ENCODE measurements at regions of chr4 and their contacts with region 1.

Region 1: DNA sequence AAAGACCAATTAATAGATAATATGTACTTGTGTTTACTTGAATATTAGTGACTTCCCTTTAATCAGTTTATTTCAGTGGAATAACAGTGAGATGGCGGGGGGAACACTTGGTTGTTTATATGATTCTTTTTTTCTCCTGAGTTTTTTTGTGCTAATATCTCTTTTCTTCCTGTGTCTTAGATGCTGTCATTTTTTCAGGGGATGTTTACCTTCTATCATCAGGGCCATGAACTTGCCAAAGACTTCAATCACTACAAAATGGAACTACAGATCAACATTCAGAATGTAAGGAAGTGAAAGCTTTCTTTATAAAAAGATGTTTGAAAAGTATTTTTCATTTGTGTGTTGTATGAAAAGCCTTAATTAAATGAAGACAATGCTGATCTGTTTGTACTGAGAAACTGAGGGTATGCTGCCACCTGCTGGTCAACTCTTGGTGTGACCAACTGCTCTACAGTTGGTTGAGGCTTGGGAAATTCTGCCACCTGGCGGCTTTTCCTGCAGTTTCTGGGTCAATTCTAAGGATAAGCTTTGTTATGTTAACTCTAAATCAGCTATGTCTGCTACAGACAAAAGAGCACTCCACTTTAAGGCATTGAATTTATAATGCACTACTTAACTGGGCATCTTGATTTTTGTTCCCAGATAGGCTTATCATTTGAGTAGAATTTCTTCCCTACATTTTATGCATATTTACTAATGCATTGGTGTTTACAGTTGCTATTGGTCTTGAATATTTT is 134.8 kb downstream of the ARHGAP10 start:
- DNase-seq: peak; percentile 89 to 97
- ATAC-seq: peak; percentile 93 to 100 (median 99)
- H3K4me3 ChIP-seq: no peak overlapping the region
- H3K4me3 Mint-ChIP-seq: no peak overlapping the region
- H3K27ac ChIP-seq: no peak overlapping the region
- H3K27ac Mint-ChIP-seq: peak overlapping the region; percentile 42 to 77
- H3K4me1 ChIP-seq: no peaks in the 10 kb centered on the region
- H3K4me1 Mint-ChIP-seq: peaks cover 15 to 17% of the 10 kb centered on the region in 2 donors
- H3K27me3 ChIP-seq: no peaks in the 10 kb centered on the region
- H3K27me3 Mint-ChIP-seq: no peaks in the 10 kb centered on the region
- CTCF ChIP-seq: peak; percentile 100

Region 2: GRCh38 chr4:147160908-147161513 is 705.7 kb before region 1 on chr4:
- intact Hi-C with region 1: loop called (anchors 5 kb)
- DNase-seq: peak in 1 of 2 donors; percentile 30
- ATAC-seq: peak in 1 of 3 donors; percentile 45
- H3K4me3 ChIP-seq: no peak overlapping the region
- H3K4me3 Mint-ChIP-seq: no peak overlapping the region
- H3K27ac ChIP-seq: no peak overlapping the region
- H3K27ac Mint-ChIP-seq: no peak overlapping the region
- H3K4me1 ChIP-seq: no peaks in the 10 kb centered on the region
- H3K4me1 Mint-ChIP-seq: no peaks in the 10 kb centered on the region
- H3K27me3 ChIP-seq: no peaks in the 10 kb centered on the region
- H3K27me3 Mint-ChIP-seq: peaks cover 8% of the 10 kb centered on the region in 2 donors
- CTCF ChIP-seq: peak; percentile 36

Region 3: DNA sequence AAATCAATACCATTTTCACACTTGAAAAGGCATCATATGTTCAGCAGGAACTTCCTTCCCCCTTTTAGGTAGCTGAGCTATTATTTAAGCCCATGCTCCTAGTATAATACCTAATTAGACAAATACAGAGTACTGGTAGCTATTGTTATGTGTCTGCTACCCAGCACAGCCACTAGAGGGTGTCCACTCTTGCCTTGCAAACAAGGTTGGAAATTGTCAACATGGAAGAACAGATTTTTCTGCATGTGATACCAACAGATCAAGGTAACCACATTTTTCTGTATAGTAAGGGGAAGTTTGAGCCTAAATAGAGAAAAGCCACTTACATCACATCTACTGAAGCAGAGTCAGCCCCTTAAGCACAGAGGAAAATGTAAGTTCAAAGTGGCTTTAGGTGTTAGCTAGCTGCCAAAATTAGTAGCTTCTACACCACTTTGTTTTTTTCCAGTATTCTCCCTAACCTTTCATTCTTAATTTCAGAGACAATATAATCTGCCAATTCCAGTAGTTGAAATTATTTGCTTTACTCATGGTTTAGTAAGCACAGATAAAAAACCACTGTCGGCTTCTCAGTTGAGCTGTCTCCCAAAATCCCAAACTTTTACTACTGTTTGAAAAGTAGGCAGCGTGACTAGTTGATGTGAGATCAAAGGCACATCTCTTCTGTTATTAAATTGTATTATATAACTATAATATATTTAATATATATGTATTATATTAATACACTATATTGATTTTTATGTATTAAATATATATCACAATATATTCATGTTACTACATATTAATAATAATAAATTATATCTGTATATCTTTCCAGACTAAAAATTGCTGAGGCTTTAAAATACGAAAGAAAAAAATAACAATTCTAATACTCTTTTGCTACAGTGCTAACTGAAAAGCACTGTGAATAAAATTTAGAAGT is 347.6 kb before region 1 on chr4:
- intact Hi-C with region 1: loop called (anchors 1 kb)
- DNase-seq: peak in 1 of 2 donors; percentile 66
- ATAC-seq: peak in 2 of 3 donors; percentile 60 to 71
- H3K4me3 ChIP-seq: no peak overlapping the region
- H3K4me3 Mint-ChIP-seq: no peak overlapping the region
- H3K27ac ChIP-seq: no peak overlapping the region
- H3K27ac Mint-ChIP-seq: no peak overlapping the region
- H3K4me1 ChIP-seq: no peaks in the 10 kb centered on the region
- H3K4me1 Mint-ChIP-seq: no peaks in the 10 kb centered on the region
- H3K27me3 ChIP-seq: no peaks in the 10 kb centered on the region
- H3K27me3 Mint-ChIP-seq: peaks cover 7 to 12% of the 10 kb centered on the region in 2 donors
- CTCF ChIP-seq: peak; percentile 73

Region 4: GRCh38 chr4:147590249-147590920 is 276.3 kb before region 1 on chr4:
- intact Hi-C with region 1: loop called (anchors 2 kb)
- DNase-seq: peak in 1 of 2 donors; percentile 60
- ATAC-seq: peak in 1 of 3 donors; percentile 45
- H3K4me3 ChIP-seq: no peak overlapping the region
- H3K4me3 Mint-ChIP-seq: no peak overlapping the region
- H3K27ac ChIP-seq: no peak overlapping the region
- H3K27ac Mint-ChIP-seq: no peak overlapping the region
- H3K4me1 ChIP-seq: no peaks in the 10 kb centered on the region
- H3K4me1 Mint-ChIP-seq: no peaks in the 10 kb centered on the region
- H3K27me3 ChIP-seq: peaks cover 3% of the 10 kb centered on the region
- H3K27me3 Mint-ChIP-seq: peaks cover 11 to 13% of the 10 kb centered on the region in 2 donors
- CTCF ChIP-seq: peak; percentile 62

Region 5: GRCh38 chr4:147617173-147617840 is 249.4 kb before region 1 on chr4 and contains the start of gene TMEM184C:
- intact Hi-C with region 1: loop called (anchors 1 kb)
- DNase-seq: peak; percentile 98 to 99
- ATAC-seq: peak; percentile 94 to 99 (median 96)
- H3K4me3 ChIP-seq: peak within 1 kb of the TSS; percentile 54
- H3K4me3 Mint-ChIP-seq: peak within 1 kb of the TSS; percentile 99
- H3K27ac ChIP-seq: peak within 1 kb of the TSS; percentile 80
- H3K27ac Mint-ChIP-seq: peak within 1 kb of the TSS; percentile 96 to 99
- H3K4me1 ChIP-seq: peaks cover 20% of the 10 kb centered on the region
- H3K4me1 Mint-ChIP-seq: peaks cover 30% of the 10 kb centered on the region in 2 donors
- H3K27me3 ChIP-seq: no peaks in the 10 kb centered on the region
- H3K27me3 Mint-ChIP-seq: peaks cover 9 to 32% of the 10 kb centered on the region in 2 donors
- CTCF ChIP-seq: no peak
- total RNA-seq, gene TMEM184C: 14.4 to 15.5 (median 15.1) TPM

Region 6: DNA sequence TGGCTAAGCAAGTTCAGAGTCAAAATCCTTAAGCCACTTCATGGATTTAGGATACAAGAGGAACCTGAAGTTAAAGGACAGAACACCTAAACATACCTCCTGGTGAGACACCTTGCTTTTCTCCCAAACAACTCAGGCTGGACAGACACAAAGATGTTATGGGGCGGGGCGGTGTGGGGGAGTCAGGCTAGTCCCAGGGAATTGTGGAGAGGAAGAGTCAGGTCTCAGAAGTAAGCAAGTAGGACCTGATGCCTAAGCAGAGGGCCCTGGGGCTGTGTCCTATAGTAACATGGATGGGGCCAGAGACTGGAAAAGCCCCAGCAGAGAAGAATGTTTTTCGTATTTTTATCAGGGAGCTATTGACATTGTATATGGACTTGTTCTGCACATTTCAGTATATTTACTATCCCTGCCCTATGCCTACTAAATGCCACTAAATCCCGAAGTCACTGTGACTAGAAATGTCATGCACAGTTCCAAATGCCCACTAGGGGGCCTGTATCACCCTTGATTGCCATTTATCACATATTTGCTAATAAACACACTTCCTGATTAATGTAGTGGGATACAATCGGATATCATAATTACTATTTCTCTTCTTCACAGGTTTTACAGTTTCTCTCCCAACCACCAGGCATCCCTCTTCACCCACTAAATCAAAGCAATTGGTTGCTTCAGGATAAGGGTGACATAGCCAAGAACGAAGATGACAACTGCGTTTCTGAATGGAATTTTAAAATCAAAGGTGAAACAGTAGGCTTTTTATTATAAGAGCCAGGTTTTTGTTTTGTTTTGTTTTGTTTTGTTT is 158.6 kb before region 1 on chr4:
- intact Hi-C with region 1: loop called (anchors 1 kb)
- DNase-seq: peak; percentile 27 to 79
- ATAC-seq: peak; percentile 65 to 86 (median 80)
- H3K4me3 ChIP-seq: no peak overlapping the region
- H3K4me3 Mint-ChIP-seq: no peak overlapping the region
- H3K27ac ChIP-seq: no peak overlapping the region
- H3K27ac Mint-ChIP-seq: no peak overlapping the region
- H3K4me1 ChIP-seq: no peaks in the 10 kb centered on the region
- H3K4me1 Mint-ChIP-seq: peaks cover 8 to 9% of the 10 kb centered on the region in 2 donors
- H3K27me3 ChIP-seq: no peaks in the 10 kb centered on the region
- H3K27me3 Mint-ChIP-seq: peaks cover 0 to 3% of the 10 kb centered on the region in 2 donors
- CTCF ChIP-seq: peak; percentile 92

Measured in natural killer cell (primary cell).